ENCODE measurements at regions of chr5 and their contacts with region 1.

Region 1: GRCh38 chr5:95730730-95731570 is at the start of gene RHOBTB3:
- DNase-seq: peak; percentile 69 to 91 (median 88)
- H3K4me3 ChIP-seq: peak within 1 kb of the TSS; percentile 58 to 94 (median 85)
- H3K27ac ChIP-seq: peak within 1 kb of the TSS; percentile 79 to 98 (median 95)
- H3K27me3 ChIP-seq: no peaks in the 10 kb centered on the region
- CTCF ChIP-seq: peak in 23 of 56 donors; percentile 2 to 38 (median 16)
- total RNA-seq, gene RHOBTB3: 78.4 to 315 (median 137) TPM

Region 2: DNA sequence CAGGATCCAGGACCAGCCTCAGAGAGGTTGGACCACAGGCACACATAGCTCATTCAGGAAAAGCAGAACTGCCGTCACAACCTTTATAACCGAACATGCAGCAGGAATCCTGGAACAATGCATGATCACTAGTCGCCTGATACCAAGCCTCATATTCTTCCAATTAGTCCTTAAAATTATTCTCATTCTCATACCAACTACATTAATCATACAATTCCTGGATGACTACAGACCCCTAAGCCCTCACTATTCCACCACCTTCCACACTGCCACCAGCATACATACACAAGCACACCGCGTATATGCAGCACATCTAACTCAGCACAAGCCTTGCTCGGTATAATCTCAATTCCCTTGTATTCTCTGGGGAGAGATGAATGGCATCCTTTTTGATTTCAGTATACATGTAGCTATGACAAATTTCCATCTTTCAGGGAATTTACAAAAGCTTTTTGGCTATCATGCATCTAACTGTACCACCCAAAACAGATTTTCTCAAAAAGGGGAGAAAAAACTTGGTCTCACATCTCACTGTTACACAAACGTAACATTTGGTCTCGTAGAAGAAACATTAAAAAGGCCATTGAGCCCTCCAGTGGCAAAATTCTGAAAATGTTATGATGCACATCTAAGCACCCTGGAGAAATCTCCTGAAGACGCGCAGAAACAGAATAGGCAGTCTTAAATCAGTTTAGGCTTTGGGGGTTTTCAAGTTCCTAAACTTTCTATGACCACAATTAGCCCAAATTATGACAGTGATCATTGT is 492.2 kb before region 1 on chr5:
- intact Hi-C with region 1: no loop called
- DNase-seq: peak in 1 of 10 donors; percentile 30
- H3K4me3 ChIP-seq: peak overlapping the region in 26 of 59 donors; percentile 6 to 48 (median 30)
- H3K27ac ChIP-seq: peak overlapping the region in 1 of 59 donors; percentile 37
- H3K27me3 ChIP-seq: peaks cover 0 to 3% (median 0%) of the 10 kb centered on the region in 45 donors
- CTCF ChIP-seq: peak in 48 of 56 donors; percentile 13 to 65 (median 43)

Region 3: GRCh38 chr5:95554647-95555548 is 176.1 kb before region 1 on chr5 and contains the starts of genes ARSK and SKIC3:
- intact Hi-C with region 1: loop called in 1 of 2 experiments (anchors 10 kb)
- DNase-seq: peak; percentile 90 to 98 (median 94)
- H3K4me3 ChIP-seq: peak within 1 kb of the TSS; percentile 61 to 100 (median 89)
- H3K27ac ChIP-seq: peak within 1 kb of the TSS; percentile 55 to 96 (median 86)
- H3K27me3 ChIP-seq: no peaks in the 10 kb centered on the region
- CTCF ChIP-seq: peak in 46 of 56 donors; percentile 4 to 55 (median 37)
- total RNA-seq, gene ARSK: 4.7 to 15.9 (median 8.7) TPM
- total RNA-seq, gene SKIC3: 75.4 to 149 (median 113) TPM

Region 4: GRCh38 chr5:95664204-95664786 is 66.7 kb before region 1 on chr5:
- intact Hi-C with region 1: loop called (anchors 2 to 5 kb)
- DNase-seq: peak in 1 of 10 donors; percentile 18
- H3K4me3 ChIP-seq: peak overlapping the region in 9 of 59 donors; percentile 1 to 26 (median 5)
- H3K27ac ChIP-seq: peak overlapping the region in 16 of 59 donors; percentile 1 to 58 (median 25)
- H3K27me3 ChIP-seq: no peaks in the 10 kb centered on the region
- CTCF ChIP-seq: peak; percentile 56 to 95 (median 84)

Region 5: GRCh38 chr5:95669540-95669939 is 61.4 kb before region 1 on chr5:
- intact Hi-C with region 1: loop called (anchors 2 to 5 kb)
- DNase-seq: peak in 9 of 10 donors; percentile 37 to 83 (median 71)
- H3K4me3 ChIP-seq: peak overlapping the region in 1 of 59 donors; percentile 6
- H3K27ac ChIP-seq: peak overlapping the region in 58 of 59 donors; percentile 3 to 93 (median 74)
- H3K27me3 ChIP-seq: no peaks in the 10 kb centered on the region
- CTCF ChIP-seq: peak in 1 of 56 donors; percentile 17

Region 6: GRCh38 chr5:95846554-95847260 is 115.8 kb after region 1 on chr5:
- intact Hi-C with region 1: loop called in 1 of 2 experiments (anchors 5 kb)
- DNase-seq: peak in 8 of 10 donors; percentile 61 to 85 (median 78)
- H3K4me3 ChIP-seq: no peak overlapping the region
- H3K27ac ChIP-seq: peak overlapping the region in 29 of 59 donors; percentile 2 to 87 (median 33)
- H3K27me3 ChIP-seq: no peaks in the 10 kb centered on the region
- CTCF ChIP-seq: peak; percentile 95 to 100 (median 98)